ENCODE measurements at regions of chr1 and their contacts with region 1.

Region 1: GRCh38 chr1:33349778-33350610 is 29.1 kb upstream of the A3GALT2 start:
- DNase-seq: peak; percentile 76
- H3K4me3 Mint-ChIP-seq: peak overlapping the region; percentile 89
- H3K27ac Mint-ChIP-seq: peak overlapping the region; percentile 84
- H3K4me1 Mint-ChIP-seq: peaks cover 45% of the 10 kb centered on the region
- H3K27me3 Mint-ChIP-seq: no peaks in the 10 kb centered on the region

Region 2: GRCh38 chr1:33181921-33182341 is 168.1 kb before region 1 on chr1 and contains the start of gene TRIM62:
- CTCF ChIA-PET with region 1: no interaction called
- intact Hi-C with region 1: loop called (anchors 5 kb)
- DNase-seq: peak; percentile 69
- H3K4me3 Mint-ChIP-seq: peak within 1 kb of the TSS; percentile 86
- H3K27ac Mint-ChIP-seq: no peak within 1 kb of the TSS
- H3K4me1 Mint-ChIP-seq: peaks cover 10% of the 10 kb centered on the region
- H3K27me3 Mint-ChIP-seq: no peaks in the 10 kb centered on the region
- total RNA-seq, gene TRIM62: 1.5 TPM

Region 3: DNA sequence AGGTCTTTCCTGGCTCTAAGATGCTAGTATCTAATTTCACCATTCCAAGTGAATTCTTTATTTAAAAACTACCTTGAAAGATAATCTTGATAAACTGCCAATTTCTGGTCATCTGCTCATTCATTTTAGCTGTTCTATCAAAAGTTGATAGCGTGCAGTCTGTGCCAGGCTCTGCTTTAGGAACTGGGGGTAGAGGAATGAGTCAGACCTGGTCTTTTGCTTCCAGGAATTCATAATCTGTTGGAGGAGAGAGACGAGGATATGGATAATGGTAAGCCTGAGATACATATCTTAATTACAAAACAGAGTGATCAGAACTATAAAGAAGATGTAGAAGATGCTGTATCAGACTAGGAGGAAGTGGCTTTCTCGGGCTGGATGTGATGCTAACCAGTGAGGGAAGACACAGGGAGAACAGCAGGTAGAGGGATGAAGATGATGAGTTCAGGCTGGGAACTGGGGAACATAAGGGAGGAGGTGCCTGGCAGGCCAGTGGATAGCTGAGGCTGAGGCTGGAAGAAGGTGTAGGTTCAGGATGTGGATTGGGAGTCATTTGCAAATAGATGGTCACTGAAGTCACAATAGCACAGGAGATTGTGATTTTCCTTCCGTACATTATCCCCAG is 93.2 kb after region 1 on chr1:
- CTCF ChIA-PET with region 1: no interaction called
- intact Hi-C with region 1: no loop called
- DNase-seq: no peak
- H3K4me3 Mint-ChIP-seq: no peak overlapping the region
- H3K27ac Mint-ChIP-seq: no peak overlapping the region
- H3K4me1 Mint-ChIP-seq: no peaks in the 10 kb centered on the region
- H3K27me3 Mint-ChIP-seq: peaks cover 7% of the 10 kb centered on the region